Sciatic nerve (tissue), 2 donors: ENCODE measurements at regions of chr5 and their contacts with region 1.

Region 1: DNA sequence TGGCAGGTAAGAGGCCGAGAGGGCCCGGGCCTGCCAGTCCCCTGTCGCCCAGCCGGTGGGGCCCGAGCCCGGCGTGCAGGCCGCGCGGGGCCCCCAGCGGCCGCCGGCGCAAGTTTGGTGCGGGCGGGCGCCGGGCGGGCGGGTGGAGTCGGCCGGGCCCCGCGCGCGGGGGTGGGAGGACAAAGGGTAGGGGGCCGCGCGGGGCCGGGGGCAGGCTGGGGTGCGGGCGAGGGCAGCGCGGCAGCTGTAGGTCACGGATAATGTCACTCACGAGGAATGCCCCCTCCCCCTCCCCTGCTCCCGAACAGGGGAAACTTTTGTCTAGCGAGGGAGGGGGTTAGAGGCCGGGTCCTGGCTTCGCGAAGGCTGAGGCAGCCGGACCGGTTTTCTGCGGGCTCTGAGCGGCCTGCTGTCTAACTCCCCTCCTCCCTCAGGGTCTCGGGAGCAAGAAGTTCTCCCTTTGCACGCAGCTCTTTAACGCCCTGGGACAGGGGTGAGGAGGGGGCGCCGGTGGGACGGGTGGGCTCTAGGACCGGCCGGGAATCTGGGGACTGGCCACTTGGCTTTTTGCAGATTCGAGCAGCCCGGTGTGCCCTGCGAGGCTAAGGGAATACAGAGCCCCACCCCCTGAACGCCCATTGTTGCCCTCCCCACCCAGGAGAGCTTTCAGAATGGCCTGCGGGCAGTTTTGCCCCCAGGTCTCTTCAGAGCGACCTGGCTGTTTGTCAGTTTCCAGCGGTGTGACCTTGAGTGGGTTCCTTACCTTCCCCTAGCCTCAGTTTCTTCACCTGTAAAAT is 21.3 kb upstream of the NDST1 start:
- DNase-seq: peak; percentile 86
- ATAC-seq: peak; percentile 55

Region 2: GRCh38 chr5:149240354-149240998 is 1246.1 kb before region 1 on chr5:
- intact Hi-C with region 1: no loop called
- DNase-seq: no peak
- ATAC-seq: peak; percentile 49

Region 3: DNA sequence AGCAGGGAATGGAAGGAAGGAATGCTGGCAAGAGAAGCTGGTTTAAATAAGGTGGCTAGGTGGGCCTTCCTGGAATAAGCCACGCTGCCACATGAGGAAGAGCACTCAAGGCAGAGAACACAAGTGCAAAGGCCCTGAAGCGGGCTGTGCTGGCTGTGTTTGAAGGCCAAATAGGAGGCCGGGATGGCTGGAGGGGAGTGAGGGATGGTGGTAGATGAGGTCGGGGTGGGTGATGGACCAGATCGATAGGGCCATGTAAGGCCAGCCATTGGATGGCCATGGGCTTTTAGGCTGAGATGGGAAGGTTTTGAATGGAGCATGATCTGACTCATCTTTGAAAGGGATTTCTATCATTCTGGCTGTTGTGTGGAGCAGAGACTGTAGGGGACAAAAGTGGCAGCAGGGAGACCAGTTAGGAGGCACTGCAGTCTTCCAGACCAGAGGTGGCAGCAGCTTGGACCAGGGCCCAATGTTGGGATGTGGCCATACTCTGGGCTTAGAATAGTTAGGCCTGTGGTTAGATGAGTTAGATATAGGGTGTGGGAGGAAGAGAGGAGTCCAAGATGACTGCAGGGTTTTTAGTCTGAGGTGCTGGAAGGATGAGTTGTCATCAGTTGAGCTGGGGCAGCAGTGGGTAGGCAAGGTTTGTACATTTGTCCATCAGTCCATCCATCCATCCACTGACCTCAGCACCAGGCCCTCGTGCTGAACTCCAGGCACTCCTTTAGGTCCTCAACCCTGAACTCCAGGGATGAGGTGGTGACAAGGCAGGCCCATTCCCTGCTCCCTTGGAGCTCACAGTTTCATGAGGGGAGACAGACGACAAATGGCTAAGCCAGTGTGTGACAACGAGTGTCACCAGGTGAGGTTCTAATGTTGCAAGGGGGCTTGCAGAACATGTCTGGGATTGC is 51.7 kb after region 1 on chr5:
- intact Hi-C with region 1: loop called (anchors 10 kb)
- DNase-seq: no peak
- ATAC-seq: no peak